Activated T-helper 1 cell treated with anti-CD3 and anti-CD28 coated beads, Interleukin-12 subunit alpha, Interleukin-12 subunit beta, Interleukin-2, Interleukin-4 antibody, amounts not matched to agents 30 ng/mL and 10 ng/mL and 1 ng/mL, durations not matched to agents 14 hours and 24 hours and 36 hours (primary cell): ENCODE measurements at regions of chr5 and their contacts with region 1.

Region 1: DNA sequence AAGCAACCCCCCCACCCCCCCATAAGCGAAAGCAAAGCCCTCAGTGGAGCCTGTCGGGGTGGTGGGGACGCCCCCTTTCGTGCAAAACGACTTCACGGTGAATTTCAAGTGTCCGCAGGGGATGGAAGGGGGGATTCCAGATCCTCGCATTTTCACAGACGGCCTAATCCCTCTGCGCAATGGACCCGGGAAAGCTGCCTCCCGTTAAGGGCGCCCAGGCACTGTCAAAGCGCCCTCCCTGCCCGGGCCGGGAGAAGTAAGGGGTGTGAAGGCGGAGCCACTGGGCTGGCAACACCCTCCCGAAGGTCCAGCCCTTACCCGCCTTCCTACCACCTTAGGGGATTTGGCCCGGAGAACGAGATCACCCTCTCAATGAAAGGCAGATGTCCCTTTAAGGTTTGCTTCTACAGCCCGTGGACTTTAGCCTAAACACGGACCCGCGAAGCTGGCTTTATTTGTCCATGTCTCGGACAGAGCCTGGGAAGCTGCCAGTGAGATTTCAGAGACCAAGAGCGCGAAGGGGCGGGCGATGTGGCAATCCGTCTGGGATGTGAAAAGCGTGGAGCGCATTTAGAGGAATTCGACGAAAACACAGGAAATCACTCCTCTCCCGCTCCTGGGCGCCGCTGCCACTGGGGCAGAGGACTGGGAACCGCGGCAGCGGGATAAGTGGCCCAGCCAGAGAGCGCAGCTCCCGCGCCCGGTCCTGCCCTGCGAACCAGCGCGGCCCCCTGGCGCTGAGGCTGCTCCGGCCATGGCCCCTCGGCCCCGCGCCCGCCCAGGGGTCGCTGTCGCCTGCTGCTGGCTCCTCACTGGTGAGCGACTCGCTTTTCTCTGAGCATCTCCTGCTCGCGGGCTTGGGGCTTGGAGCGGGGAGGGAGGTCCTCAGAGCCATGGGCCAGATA is at the starts of genes ITGA1 and PELO:
- DNase-seq: peak; percentile 32
- H3K4me3 Mint-ChIP-seq: peak within 1 kb of the TSS; percentile 91
- H3K27ac Mint-ChIP-seq: peak within 1 kb of the TSS; percentile 32
- H3K4me1 Mint-ChIP-seq: peaks cover 33% of the 10 kb centered on the region
- H3K27me3 Mint-ChIP-seq: peaks cover 15% of the 10 kb centered on the region
- total RNA-seq, gene ITGA1: 2.2 and 2.5 TPM in 2 replicates
- total RNA-seq, gene PELO: 19.4 and 20.0 TPM in 2 replicates

Region 2: DNA sequence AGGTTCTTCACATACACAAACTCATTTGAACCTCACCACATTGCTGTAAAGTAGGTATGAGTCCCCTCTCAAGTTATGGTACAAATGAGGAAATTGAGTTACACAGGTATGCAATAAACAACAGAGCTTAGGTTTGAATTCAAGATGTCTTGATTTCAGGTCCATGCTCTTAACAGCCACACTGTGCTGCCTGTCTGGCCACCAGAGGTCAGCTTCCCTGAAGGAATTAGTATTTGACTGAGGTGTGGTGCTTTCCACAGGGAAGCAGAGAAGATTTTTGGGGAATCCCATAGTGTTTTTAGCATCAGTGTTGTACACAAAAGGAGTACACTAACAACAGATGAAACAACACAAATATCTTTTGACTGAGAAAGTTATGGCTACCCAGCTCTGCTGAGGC is 94.6 kb before region 1 on chr5:
- intact Hi-C with region 1: loop called (anchors 5 kb)
- DNase-seq: no peak
- H3K4me3 Mint-ChIP-seq: no peak overlapping the region
- H3K27ac Mint-ChIP-seq: no peak overlapping the region
- H3K4me1 Mint-ChIP-seq: peaks cover 24% of the 10 kb centered on the region
- H3K27me3 Mint-ChIP-seq: peaks cover 16% of the 10 kb centered on the region

Region 3: GRCh38 chr5:52709171-52709925 is 78.5 kb before region 1 on chr5:
- intact Hi-C with region 1: loop called (anchors 5 kb)
- DNase-seq: peak; percentile 17
- H3K4me3 Mint-ChIP-seq: peak overlapping the region; percentile 28
- H3K27ac Mint-ChIP-seq: peak overlapping the region; percentile 59
- H3K4me1 Mint-ChIP-seq: peaks cover 74% of the 10 kb centered on the region
- H3K27me3 Mint-ChIP-seq: no peaks in the 10 kb centered on the region

Region 4: DNA sequence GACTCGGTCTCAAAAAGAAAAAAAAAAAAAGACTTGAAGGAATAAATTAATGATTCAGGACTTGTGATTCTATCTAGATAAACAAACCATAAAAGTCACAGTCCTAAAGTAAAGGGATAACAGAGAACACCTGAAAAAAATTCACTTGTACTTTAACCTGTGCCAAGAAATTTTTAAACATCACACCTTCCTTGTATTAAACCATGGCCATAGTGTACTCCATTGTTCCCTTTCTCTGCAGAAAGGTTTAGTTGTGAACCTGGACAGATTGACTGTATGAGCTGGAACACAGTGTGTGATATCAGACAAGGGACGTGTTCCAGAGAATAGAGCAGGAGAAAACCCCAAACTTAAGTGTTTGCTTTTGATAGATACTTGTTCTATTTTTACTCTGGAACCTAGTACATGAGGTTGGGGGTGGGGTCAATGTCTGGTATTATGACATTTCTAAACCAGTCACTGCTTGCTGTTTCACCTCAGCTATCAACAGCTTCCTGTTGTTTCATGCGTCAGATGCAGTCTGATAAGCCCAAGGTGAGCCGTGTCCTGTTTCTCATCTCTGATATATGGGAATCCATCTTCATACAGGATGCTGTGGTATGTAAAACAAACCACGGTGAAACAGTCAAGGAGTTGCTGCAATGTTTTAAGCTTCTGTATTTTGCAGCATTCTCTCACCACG is 62.6 kb before region 1 on chr5:
- intact Hi-C with region 1: loop called (anchors 1 kb)
- DNase-seq: peak; percentile 69
- H3K4me3 Mint-ChIP-seq: peak overlapping the region; percentile 78
- H3K27ac Mint-ChIP-seq: peak overlapping the region; percentile 85
- H3K4me1 Mint-ChIP-seq: peaks cover 61% of the 10 kb centered on the region
- H3K27me3 Mint-ChIP-seq: no peaks in the 10 kb centered on the region

Region 5: DNA sequence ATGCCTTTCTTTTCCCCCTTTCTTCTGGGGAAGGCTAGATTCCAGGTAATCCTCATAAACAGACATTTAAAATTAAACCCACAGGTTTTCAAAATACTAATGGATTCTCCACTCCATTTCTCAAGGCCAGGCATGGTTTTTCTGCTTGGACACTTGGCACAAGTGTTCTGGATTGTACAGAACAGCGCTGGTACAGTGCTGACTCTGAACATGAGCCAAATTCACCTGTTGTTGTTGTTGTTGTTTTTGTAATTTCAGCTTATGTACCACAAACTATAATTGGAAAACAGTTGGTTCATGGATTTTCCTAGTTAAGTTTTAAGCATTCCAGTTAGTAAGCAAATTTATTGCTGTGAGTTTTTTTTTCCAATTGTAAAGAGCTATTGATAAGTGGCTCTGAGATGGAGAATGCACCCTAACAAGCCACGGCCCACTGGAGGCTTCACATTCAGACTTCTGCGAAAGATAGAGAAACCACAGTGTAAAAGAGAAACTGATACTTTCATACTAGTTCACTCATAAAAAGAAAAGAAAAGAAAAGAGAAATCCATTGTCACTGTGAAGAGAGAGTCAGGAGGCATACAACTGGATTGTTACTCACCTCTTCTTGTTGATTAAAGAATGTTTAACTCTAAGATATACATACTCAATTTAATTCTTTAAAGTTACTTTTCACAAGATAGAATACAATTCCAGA is 16.4 kb before region 1 on chr5:
- intact Hi-C with region 1: loop called (anchors 1 kb)
- DNase-seq: peak; percentile 37
- H3K4me3 Mint-ChIP-seq: peak overlapping the region; percentile 3
- H3K27ac Mint-ChIP-seq: peak overlapping the region; percentile 61
- H3K4me1 Mint-ChIP-seq: peaks cover 81% of the 10 kb centered on the region
- H3K27me3 Mint-ChIP-seq: peaks cover 5% of the 10 kb centered on the region